Breast epithelium (tissue), 4 donors: ENCODE measurements at regions of chrX and their contacts with region 1.

Region 1: GRCh38 chrX:140918407-140919038 is 83.9 kb upstream of the SPANXB1 start:
- DNase-seq: no peak
- H3K4me3 ChIP-seq: no peak overlapping the region
- H3K27ac ChIP-seq: no peak overlapping the region
- H3K4me1 ChIP-seq: no peaks in the 10 kb centered on the region
- H3K27me3 ChIP-seq: peaks cover 0 to 21% of the 10 kb centered on the region in 2 donors
- CTCF ChIP-seq: peak in 2 of 3 donors; percentile 21 to 58
- POLR2A ChIP-seq: no peak

Region 2: DNA sequence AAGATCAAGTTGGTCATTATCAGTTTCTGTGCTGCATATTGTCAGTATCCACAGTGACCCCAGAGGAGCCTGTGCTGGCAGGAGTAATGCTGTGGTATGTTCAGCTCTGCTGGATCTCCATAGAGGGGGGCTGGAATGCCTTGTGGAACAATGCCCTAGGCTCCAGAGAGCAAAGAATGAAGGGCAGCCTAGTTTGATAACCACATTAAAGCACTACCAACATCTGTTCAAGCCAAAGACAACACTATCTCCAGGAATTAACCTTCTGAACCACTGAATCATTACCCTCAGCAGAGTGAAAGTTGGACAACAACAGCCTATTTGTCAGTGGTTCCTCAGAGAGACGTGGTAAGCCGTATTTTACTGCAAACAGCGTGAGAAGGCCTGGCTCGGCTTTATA is 760.9 kb before region 1 on chrX:
- intact Hi-C with region 1: no loop called
- DNase-seq: no peak
- H3K4me3 ChIP-seq: no peak overlapping the region
- H3K27ac ChIP-seq: no peak overlapping the region
- H3K4me1 ChIP-seq: no peaks in the 10 kb centered on the region
- H3K27me3 ChIP-seq: peaks cover 0 to 31% of the 10 kb centered on the region in 2 donors
- CTCF ChIP-seq: no peak
- POLR2A ChIP-seq: no peak

Region 3: DNA sequence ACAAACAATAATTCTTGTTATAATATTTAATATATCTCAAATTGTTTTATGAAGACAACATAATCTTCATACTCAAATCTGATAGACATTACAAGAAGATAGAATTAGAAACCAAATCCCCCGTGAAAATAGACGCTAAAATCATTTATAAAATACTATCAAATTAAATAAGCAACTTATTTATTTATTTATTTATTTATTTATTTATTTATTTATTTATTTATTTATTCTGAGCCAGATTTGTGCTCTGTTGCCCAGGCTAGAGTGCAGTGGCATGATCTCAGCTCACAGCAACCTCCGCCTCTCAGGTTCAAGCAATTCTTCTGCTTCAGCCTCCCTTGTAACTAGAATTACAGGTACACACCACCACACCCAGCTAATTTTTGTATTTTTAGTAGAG is 1581.5 kb after region 1 on chrX:
- intact Hi-C with region 1: loop called (anchors 10 kb)
- DNase-seq: no peak
- H3K4me3 ChIP-seq: no peak overlapping the region
- H3K27ac ChIP-seq: no peak overlapping the region
- H3K4me1 ChIP-seq: no peaks in the 10 kb centered on the region
- H3K27me3 ChIP-seq: no peaks in the 10 kb centered on the region
- CTCF ChIP-seq: no peak
- POLR2A ChIP-seq: no peak